Panc1 (cell line): ENCODE measurements at regions of chr16 and their contacts with region 1.

Region 1: GRCh38 chr16:66714654-66715307 is 18.2 kb upstream of the CMTM4 start:
- DNase-seq: no peak
- ATAC-seq: no peak
- H3K4me3 ChIP-seq: no peak overlapping the region
- H3K27ac ChIP-seq: no peak overlapping the region
- H3K4me1 ChIP-seq: no peaks in the 10 kb centered on the region
- H3K27me3 ChIP-seq: no peaks in the 10 kb centered on the region
- CTCF ChIP-seq: no peak

Region 2: GRCh38 chr16:66660422-66661209 is 54.2 kb before region 1 on chr16:
- CTCF ChIA-PET with region 1: interaction called, 16 read pairs
- POLR2A ChIA-PET with region 1: interaction called, 12 read pairs
- in situ Hi-C with region 1: no loop called
- intact Hi-C with region 1: no loop called
- DNase-seq: no peak
- ATAC-seq: peak; percentile 93
- H3K4me3 ChIP-seq: peak overlapping the region in 1 of 2 experiments; percentile 8; a peak in 2 of 4 replicates
- H3K27ac ChIP-seq: peak overlapping the region; percentile 84
- H3K4me1 ChIP-seq: peaks cover 31% of the 10 kb centered on the region
- H3K27me3 ChIP-seq: no peaks in the 10 kb centered on the region
- CTCF ChIP-seq: peak; percentile 18; the same call in 1 of the 2 replicates